MCF 10A (cell line): ENCODE measurements at regions of chr15 and their contacts with region 1.

Region 1: GRCh38 chr15:99755692-99756409 is 22.6 kb upstream of the LYSMD4 start:
- DNase-seq: peak; percentile 72
- H3K4me3 Mint-ChIP-seq: no peak overlapping the region
- H3K27ac Mint-ChIP-seq: no peak overlapping the region
- H3K4me1 Mint-ChIP-seq: peaks cover 5% of the 10 kb centered on the region
- H3K27me3 Mint-ChIP-seq: no peaks in the 10 kb centered on the region
- CTCF ChIP-seq: peak; percentile 82

Region 2: GRCh38 chr15:99282121-99282520 is 473.7 kb before region 1 on chr15:
- CTCF ChIA-PET with region 1: interaction called, 7 read pairs
- POLR2A ChIA-PET with region 1: interaction called, 4 read pairs
- intact Hi-C with region 1: loop called (anchors 1 kb)
- DNase-seq: no peak
- H3K4me3 Mint-ChIP-seq: no peak overlapping the region
- H3K27ac Mint-ChIP-seq: no peak overlapping the region
- H3K4me1 Mint-ChIP-seq: no peaks in the 10 kb centered on the region
- H3K27me3 Mint-ChIP-seq: no peaks in the 10 kb centered on the region
- CTCF ChIP-seq: no peak

Region 3: DNA sequence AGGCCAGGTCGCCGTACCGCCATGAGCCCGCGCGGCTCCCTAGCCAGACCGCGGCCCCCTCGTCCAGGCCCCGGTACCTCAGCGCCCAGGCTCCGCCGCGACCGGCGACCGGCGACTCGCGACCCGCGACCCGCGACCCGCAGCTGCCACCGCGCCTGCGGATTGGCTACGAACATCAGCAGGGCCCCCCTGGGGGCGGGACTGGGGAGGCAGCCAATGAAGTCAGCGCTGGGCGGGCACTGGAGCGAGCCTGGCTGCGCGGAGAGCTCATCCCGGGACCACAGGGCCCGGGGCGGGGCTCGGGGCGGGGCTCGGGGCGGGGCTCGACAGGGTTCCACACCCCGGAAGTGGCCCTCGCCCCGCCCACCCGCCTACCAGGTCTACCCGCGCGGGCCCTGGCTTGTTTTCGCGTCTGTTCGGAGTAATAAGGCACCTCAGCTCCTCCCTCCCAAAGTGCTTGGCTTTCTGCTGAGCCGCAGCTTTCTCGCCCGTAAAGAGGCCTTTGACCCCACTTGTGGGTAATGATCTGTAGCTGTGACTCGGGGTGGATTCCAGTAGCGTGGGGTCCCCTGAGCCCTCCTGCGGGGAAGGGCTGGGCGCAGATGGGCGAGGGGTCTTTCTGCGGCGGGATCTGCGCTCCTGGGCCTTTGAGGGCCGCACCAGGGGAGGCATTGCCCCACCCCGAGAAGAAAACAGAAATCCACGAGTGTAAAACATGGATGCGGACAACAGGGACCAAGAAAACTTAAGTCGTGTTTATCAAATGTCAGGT is 22.4 kb before region 1 on chr15 and contains the start of gene LYSMD4:
- CTCF ChIA-PET with region 1: interaction called, 17 read pairs
- POLR2A ChIA-PET with region 1: interaction called, 14 read pairs
- intact Hi-C with region 1: no loop called
- DNase-seq: peak; percentile 95
- H3K4me3 Mint-ChIP-seq: peak within 1 kb of the TSS; percentile 77
- H3K27ac Mint-ChIP-seq: peak within 1 kb of the TSS; percentile 94
- H3K4me1 Mint-ChIP-seq: peaks cover 14% of the 10 kb centered on the region
- H3K27me3 Mint-ChIP-seq: no peaks in the 10 kb centered on the region
- CTCF ChIP-seq: no peak
- total RNA-seq, gene LYSMD4: 5.7 and 9.0 TPM in 2 replicates

Region 4: GRCh38 chr15:99741835-99742234 is 14.0 kb before region 1 on chr15:
- CTCF ChIA-PET with region 1: interaction called, 10 read pairs
- POLR2A ChIA-PET with region 1: no interaction called
- intact Hi-C with region 1: no loop called
- DNase-seq: no peak
- H3K4me3 Mint-ChIP-seq: no peak overlapping the region
- H3K27ac Mint-ChIP-seq: no peak overlapping the region
- H3K4me1 Mint-ChIP-seq: no peaks in the 10 kb centered on the region
- H3K27me3 Mint-ChIP-seq: no peaks in the 10 kb centered on the region
- CTCF ChIP-seq: no peak

Region 5: DNA sequence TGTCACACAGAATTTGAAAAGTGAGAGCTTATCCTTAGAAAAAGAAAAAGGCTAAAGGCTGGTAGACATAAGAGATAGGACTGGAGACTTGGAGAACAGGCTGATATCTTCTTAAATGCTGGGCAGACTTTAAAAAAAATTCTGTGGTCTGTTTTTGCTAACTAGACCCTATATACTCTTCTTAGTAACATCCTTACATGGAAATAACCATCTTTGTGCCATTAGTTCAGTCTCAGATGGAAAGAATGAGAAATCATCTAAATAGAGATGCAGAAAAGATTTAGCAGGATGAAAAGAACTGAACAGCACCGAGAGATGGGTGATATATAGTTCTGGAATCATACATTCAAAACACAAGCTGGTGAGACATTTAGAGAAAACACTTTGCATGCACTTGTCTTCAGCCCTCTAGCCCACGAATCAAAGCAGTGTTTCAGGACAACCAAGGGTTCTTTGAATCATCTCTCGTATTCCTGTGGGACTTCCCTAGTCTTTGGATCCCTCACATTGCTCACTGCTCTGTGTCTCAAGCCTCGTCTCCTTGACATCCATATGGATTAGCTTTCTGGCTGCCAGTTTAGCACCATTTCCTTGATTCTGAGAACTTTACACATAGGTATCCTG is 70.4 kb after region 1 on chr15:
- CTCF ChIA-PET with region 1: no interaction called
- POLR2A ChIA-PET with region 1: no interaction called
- intact Hi-C with region 1: no loop called
- DNase-seq: no peak
- H3K4me3 Mint-ChIP-seq: no peak overlapping the region
- H3K27ac Mint-ChIP-seq: no peak overlapping the region
- H3K4me1 Mint-ChIP-seq: no peaks in the 10 kb centered on the region
- H3K27me3 Mint-ChIP-seq: peaks cover 78% of the 10 kb centered on the region
- CTCF ChIP-seq: no peak

Region 6: GRCh38 chr15:99931703-99932603 is 176.1 kb after region 1 on chr15:
- CTCF ChIA-PET with region 1: no interaction called
- POLR2A ChIA-PET with region 1: no interaction called
- intact Hi-C with region 1: no loop called
- DNase-seq: no peak
- H3K4me3 Mint-ChIP-seq: no peak overlapping the region
- H3K27ac Mint-ChIP-seq: no peak overlapping the region
- H3K4me1 Mint-ChIP-seq: peaks cover 15% of the 10 kb centered on the region
- H3K27me3 Mint-ChIP-seq: no peaks in the 10 kb centered on the region
- CTCF ChIP-seq: no peak